Activated CD8-positive, alpha-beta T cell treated with anti-CD3 and anti-CD28 coated beads for 36 hours (primary cell): ENCODE measurements at regions of chr10 and their contacts with region 1.

Region 1: DNA sequence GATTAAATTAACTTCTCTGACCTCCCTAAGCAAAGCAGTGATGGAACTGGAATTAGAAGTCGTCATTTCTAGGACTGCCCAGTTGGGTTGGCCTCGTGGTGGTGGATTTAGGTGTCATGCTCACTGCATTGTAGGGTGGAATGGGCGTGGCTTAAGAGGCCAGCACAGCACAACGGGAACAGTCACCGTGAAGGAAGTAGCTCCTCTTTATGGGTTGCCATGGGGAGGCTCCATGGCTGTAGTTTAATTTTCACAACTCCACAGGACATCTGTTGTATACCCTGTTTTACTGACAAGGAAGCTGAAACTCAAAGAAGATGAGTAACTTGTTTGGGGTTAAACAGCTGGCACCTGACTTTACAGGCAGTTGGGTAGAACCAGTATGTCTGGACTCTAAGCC is 208.3 kb downstream of the CELF2 start:
- DNase-seq: peak; percentile 87
- ATAC-seq: peak; percentile 80
- H3K4me3 Mint-ChIP-seq: peak overlapping the region; percentile 50
- H3K27ac Mint-ChIP-seq: peak overlapping the region; percentile 93
- H3K4me1 Mint-ChIP-seq: peaks cover 95% of the 10 kb centered on the region
- H3K27me3 Mint-ChIP-seq: no peaks in the 10 kb centered on the region
- CTCF ChIP-seq: no peak

Region 2: DNA sequence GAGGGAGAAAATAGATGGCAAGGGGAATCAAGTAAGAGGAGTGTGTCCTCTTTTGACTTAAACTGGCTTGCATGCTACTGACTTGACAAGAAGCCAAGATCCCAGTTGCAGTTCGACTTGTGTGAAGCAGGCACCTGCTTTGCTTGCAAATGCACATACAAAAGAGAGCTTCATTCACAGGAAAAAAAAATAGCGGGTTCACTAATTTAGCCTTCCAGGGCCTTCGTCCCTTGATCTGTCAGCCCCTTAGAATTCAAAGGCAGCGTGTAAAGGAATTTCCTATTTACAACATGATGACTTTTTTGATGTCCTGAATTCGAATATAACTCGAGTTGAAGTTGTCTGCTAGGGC is 16.1 kb before region 1 on chr10:
- CTCF ChIA-PET with region 1: interaction called, 6 read pairs
- POLR2A ChIA-PET with region 1: interaction called, 53 read pairs
- intact Hi-C with region 1: no loop called
- DNase-seq: no peak
- ATAC-seq: peak; percentile 4
- H3K4me3 Mint-ChIP-seq: peak overlapping the region; percentile 72
- H3K27ac Mint-ChIP-seq: peak overlapping the region; percentile 97
- H3K4me1 Mint-ChIP-seq: peaks cover 98% of the 10 kb centered on the region
- H3K27me3 Mint-ChIP-seq: no peaks in the 10 kb centered on the region
- CTCF ChIP-seq: no peak

Region 3: DNA sequence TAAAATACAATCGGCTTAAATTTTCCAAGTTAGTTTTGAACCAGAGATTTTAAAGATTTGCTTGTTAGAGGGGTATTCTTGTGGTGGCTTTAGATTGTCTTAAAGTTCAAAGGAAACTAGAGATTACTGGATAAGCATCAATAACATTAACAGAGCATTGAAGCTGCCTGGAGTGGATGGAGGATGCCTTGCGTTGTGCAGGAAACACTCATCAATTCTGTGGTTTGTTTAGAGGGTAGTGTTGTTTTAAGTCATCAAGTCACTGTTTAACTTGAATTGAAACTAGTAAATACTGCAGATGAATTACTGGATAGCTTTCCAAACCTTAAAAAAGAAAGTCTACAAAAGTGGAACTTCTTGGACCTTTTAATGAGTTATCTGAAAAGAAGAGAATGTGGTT is 10.3 kb after region 1 on chr10:
- CTCF ChIA-PET with region 1: interaction called, 14 read pairs
- POLR2A ChIA-PET with region 1: interaction called, 64 read pairs
- intact Hi-C with region 1: no loop called
- DNase-seq: peak; percentile 57
- ATAC-seq: peak; percentile 48
- H3K4me3 Mint-ChIP-seq: peak overlapping the region; percentile 20
- H3K27ac Mint-ChIP-seq: peak overlapping the region; percentile 92
- H3K4me1 Mint-ChIP-seq: peaks cover 95% of the 10 kb centered on the region
- H3K27me3 Mint-ChIP-seq: no peaks in the 10 kb centered on the region
- CTCF ChIP-seq: no peak

Region 4: GRCh38 chr10:11242443-11243387 is 16.8 kb after region 1 on chr10:
- CTCF ChIA-PET with region 1: interaction called, 3 read pairs
- POLR2A ChIA-PET with region 1: interaction called, 64 read pairs
- intact Hi-C with region 1: no loop called
- DNase-seq: peak; percentile 64
- ATAC-seq: peak; percentile 55
- H3K4me3 Mint-ChIP-seq: peak overlapping the region; percentile 39
- H3K27ac Mint-ChIP-seq: no peak overlapping the region
- H3K4me1 Mint-ChIP-seq: peaks cover 67% of the 10 kb centered on the region
- H3K27me3 Mint-ChIP-seq: no peaks in the 10 kb centered on the region
- CTCF ChIP-seq: no peak

Region 5: DNA sequence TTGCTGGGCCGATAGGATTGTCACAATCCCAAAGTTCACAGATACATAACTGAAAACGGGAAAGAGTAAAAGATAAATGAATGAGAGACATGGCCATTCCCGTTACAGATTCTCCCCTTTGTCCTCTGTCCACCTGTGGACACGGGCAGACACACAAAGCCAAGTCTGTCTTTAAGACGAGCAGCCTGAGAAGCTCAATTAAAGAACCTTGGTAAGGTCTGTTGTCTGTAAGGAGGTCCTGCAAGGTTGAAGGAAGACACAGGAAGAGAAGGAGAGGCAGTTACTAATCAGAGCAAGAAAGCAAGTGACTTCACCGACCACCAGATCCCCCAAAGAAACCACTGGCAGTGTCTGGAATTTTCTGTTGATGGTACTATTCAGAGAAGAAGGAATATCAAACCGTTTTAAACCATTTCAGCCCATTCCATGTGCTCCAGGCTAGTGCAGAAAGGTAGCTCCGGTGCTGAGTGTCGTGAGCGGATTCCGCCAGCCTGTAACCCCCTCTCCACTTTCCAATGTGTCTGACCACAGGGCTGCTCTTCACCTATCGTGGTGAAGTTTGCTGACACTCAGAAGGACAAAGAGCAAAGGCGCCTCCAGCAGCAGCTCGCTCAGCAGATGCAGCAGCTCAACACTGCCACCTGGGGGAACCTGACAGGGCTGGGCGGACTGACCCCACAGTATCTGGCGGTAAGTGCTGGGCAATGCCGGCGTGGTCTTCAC is 44.4 kb after region 1 on chr10:
- CTCF ChIA-PET with region 1: interaction called, 9 read pairs
- POLR2A ChIA-PET with region 1: interaction called, 6 read pairs
- intact Hi-C with region 1: loop called (anchors 2 kb)
- DNase-seq: peak; percentile 85
- ATAC-seq: peak; percentile 83
- H3K4me3 Mint-ChIP-seq: peak overlapping the region; percentile 3
- H3K27ac Mint-ChIP-seq: peak overlapping the region; percentile 82
- H3K4me1 Mint-ChIP-seq: peaks cover 81% of the 10 kb centered on the region
- H3K27me3 Mint-ChIP-seq: no peaks in the 10 kb centered on the region
- CTCF ChIP-seq: peak; percentile 86

Region 6: GRCh38 chr10:11525503-11525902 is 299.6 kb after region 1 on chr10:
- CTCF ChIA-PET with region 1: no interaction called
- POLR2A ChIA-PET with region 1: no interaction called
- intact Hi-C with region 1: no loop called
- DNase-seq: no peak
- ATAC-seq: no peak
- H3K4me3 Mint-ChIP-seq: no peak overlapping the region
- H3K27ac Mint-ChIP-seq: no peak overlapping the region
- H3K4me1 Mint-ChIP-seq: peaks cover 20% of the 10 kb centered on the region
- H3K27me3 Mint-ChIP-seq: no peaks in the 10 kb centered on the region
- CTCF ChIP-seq: no peak